ENCODE measurements at regions of chr6 and their contacts with region 1.

Region 1: GRCh38 chr6:41735427-41736356 is at the start of gene TFEB:
- DNase-seq: peak; percentile 97
- ATAC-seq: peak; percentile 76
- H3K4me3 Mint-ChIP-seq: peak within 1 kb of the TSS; percentile 74
- H3K27ac Mint-ChIP-seq: peak within 1 kb of the TSS; percentile 42
- H3K4me1 Mint-ChIP-seq: peaks cover 29% of the 10 kb centered on the region
- H3K27me3 Mint-ChIP-seq: no peaks in the 10 kb centered on the region
- total RNA-seq, gene TFEB: 8.5 to 9.2 TPM

Region 2: GRCh38 chr6:41545703-41546474 is 189.8 kb before region 1 on chr6 and contains the start of gene FOXP4:
- CTCF ChIA-PET with region 1: no interaction called
- POLR2A ChIA-PET with region 1: no interaction called
- intact Hi-C with region 1: loop called in 1 of 2 experiments (anchors 1 kb)
- DNase-seq: peak; percentile 92
- ATAC-seq: peak; percentile 84
- H3K4me3 Mint-ChIP-seq: peak within 1 kb of the TSS; percentile 84
- H3K27ac Mint-ChIP-seq: peak within 1 kb of the TSS; percentile 92
- H3K4me1 Mint-ChIP-seq: peaks cover 15% of the 10 kb centered on the region
- H3K27me3 Mint-ChIP-seq: peaks cover 6% of the 10 kb centered on the region
- total RNA-seq, gene FOXP4: 11.1 to 13.8 TPM

Region 3: DNA sequence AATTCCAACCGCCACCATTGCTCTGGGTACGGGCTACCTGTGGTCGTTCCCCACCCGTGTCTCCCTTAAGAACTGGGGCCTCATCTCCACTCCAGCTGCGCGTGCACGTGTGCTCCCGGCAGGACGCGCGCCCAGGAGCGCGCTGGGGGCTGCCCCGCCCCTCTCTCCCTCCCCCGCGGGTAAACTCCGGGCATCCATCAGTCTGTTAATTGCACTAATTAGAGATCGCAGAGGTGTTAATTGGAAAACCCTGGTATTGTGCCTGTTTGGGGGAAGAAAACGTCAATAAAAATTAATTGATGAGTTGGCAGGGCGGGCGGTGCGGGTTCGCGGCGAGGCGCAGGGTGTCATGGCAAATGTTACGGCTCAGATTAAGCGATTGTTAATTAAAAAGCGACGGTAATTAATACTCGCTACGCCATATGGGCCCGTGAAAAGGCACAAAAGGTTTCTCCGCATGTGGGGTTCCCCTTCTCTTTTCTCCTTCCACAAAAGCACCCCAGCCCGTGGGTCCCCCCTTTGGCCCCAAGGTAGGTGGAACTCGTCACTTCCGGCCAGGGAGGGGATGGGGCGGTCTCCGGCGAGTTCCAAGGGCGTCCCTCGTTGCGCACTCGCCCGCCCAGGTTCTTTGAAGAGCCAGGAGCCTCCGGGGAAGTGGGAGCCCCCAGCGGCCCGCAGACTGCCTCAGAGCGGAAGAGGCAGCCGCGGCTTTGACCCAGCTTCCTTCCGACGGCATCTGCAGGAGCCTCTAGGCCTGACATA is 175.1 kb before region 1 on chr6:
- CTCF ChIA-PET with region 1: no interaction called
- POLR2A ChIA-PET with region 1: no interaction called
- intact Hi-C with region 1: loop called in 1 of 2 experiments (anchors 2 kb)
- DNase-seq: peak; percentile 90
- ATAC-seq: peak; percentile 93
- H3K4me3 Mint-ChIP-seq: peak overlapping the region; percentile 79
- H3K27ac Mint-ChIP-seq: peak overlapping the region; percentile 82
- H3K4me1 Mint-ChIP-seq: peaks cover 18% of the 10 kb centered on the region
- H3K27me3 Mint-ChIP-seq: no peaks in the 10 kb centered on the region

Region 4: GRCh38 chr6:41705996-41706835 is 29.5 kb before region 1 on chr6:
- CTCF ChIA-PET with region 1: interaction called, 10 read pairs
- POLR2A ChIA-PET with region 1: no interaction called
- intact Hi-C with region 1: loop called in 1 of 2 experiments (anchors 1 kb)
- DNase-seq: peak; percentile 90
- ATAC-seq: peak; percentile 93
- H3K4me3 Mint-ChIP-seq: peak overlapping the region; percentile 34
- H3K27ac Mint-ChIP-seq: peak overlapping the region; percentile 85
- H3K4me1 Mint-ChIP-seq: peaks cover 33% of the 10 kb centered on the region
- H3K27me3 Mint-ChIP-seq: no peaks in the 10 kb centered on the region

Region 5: DNA sequence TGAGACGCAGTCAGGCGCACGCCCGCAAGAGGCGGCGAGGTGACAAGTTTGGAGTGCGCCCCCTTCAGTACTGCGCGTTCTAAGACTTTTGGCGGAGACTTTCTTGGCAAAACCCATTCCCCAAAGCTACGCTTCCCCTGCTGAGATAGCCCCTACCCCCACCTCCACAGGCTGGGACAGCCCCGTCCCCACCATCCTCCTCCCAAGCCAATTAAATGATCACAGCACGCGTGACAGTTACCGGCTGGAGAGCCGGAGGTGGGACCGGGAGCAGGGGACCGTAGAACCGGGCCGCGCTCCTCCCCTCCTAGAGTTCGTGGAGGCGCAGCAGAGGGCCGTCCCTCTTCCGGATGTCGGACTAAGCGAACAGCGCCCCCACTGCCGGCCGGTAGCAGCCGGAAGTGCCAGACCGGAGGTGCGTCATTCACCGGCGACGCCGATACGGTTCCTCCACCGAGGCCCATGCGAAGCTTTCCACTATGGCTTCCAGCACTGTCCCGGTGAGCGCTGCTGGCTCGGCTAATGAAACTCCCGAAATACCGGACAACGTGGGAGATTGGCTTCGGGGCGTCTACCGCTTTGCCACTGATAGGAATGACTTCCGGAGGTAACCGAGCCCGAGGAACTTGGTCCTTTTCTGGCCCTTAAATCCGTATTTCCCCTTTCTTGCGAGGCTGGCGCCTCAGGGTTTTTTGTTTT is 51.7 kb after region 1 on chr6 and contains the start of gene TOMM6:
- CTCF ChIA-PET with region 1: interaction called, 19 read pairs
- POLR2A ChIA-PET with region 1: no interaction called
- intact Hi-C with region 1: loop called (anchors 1 kb)
- DNase-seq: peak; percentile 98
- ATAC-seq: peak; percentile 86
- H3K4me3 Mint-ChIP-seq: peak within 1 kb of the TSS; percentile 96
- H3K27ac Mint-ChIP-seq: peak within 1 kb of the TSS; percentile 98
- H3K4me1 Mint-ChIP-seq: peaks cover 19% of the 10 kb centered on the region
- H3K27me3 Mint-ChIP-seq: peaks cover 2% of the 10 kb centered on the region
- total RNA-seq, gene TOMM6: 282 to 345 TPM

Region 6: DNA sequence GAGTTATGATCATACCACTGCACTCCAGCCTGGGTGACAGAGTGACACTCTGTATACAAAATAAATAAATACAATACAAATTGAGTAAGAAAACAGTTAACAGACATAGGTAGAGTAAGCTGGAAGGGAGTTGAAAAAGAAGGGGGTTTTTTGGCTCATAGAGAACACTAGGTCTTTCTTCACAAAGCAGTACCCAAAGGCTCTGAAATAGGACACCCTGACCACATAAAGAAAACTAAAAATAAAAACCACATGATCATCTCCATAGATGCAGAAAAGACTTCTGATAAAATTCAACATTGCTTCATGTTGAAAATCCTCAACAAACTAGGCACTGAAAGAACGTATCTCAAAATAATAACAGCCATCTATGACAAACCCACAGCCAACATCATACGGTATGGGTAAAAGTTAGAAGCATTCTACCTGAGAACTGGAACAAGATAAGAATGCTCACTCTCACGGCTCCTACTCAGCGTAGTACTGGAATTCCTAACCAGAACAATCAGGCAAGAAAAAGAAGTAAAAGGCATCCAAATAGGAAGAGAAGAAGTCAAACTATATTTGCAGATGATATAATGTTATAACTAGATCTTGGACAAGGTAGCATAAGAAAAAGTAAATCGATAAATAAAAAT is 100.4 kb after region 1 on chr6:
- CTCF ChIA-PET with region 1: no interaction called
- POLR2A ChIA-PET with region 1: no interaction called
- intact Hi-C with region 1: no loop called
- DNase-seq: no peak
- ATAC-seq: no peak
- H3K4me3 Mint-ChIP-seq: no peak overlapping the region
- H3K27ac Mint-ChIP-seq: no peak overlapping the region
- H3K4me1 Mint-ChIP-seq: no peaks in the 10 kb centered on the region
- H3K27me3 Mint-ChIP-seq: no peaks in the 10 kb centered on the region

Region 7: DNA sequence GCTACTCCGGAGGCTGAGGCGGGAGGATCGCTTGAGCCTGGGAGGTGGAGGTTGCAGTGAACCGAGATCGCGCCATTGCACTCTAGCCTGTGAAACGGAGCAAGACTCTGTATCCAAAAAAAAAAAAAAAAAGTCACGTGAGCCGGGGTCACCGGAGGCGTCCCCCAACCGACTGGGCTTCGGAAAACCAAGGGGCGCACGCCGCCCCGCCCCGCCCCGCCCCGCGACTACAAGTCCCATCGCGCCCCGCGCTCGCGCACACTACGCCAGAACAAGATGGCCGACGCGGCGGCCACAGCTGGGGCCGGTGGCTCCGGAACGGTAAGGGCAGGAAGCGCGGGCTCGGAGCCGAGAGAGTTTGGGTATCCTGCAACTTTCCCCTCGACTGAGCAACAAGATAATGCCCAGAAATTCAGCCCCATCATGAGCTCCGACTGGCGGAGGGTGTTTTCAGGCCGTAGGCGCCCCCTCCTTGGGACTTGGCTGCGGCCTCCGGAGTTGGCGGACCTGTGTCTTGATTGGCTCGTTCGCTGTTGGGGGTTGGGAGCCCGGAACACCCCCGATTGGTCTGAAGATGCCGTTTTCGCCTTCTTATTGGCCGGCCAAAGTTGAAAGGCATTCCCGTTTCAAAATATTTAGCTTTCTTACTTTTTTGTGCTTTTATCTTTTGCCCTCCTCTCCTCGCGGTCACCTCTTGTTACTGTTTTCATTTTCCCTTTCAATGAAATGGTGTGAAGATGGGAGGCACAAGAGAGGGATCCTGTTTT is 314.8 kb after region 1 on chr6 and contains the start of gene TAF8:
- CTCF ChIA-PET with region 1: no interaction called
- POLR2A ChIA-PET with region 1: no interaction called
- intact Hi-C with region 1: loop called (anchors 1 to 2 kb)
- DNase-seq: peak; percentile 94
- ATAC-seq: peak; percentile 76
- H3K4me3 Mint-ChIP-seq: peak within 1 kb of the TSS; percentile 88
- H3K27ac Mint-ChIP-seq: peak within 1 kb of the TSS; percentile 96
- H3K4me1 Mint-ChIP-seq: peaks cover 64% of the 10 kb centered on the region
- H3K27me3 Mint-ChIP-seq: no peaks in the 10 kb centered on the region
- total RNA-seq, gene TAF8: 52.3 to 53.1 TPM

Region 8: DNA sequence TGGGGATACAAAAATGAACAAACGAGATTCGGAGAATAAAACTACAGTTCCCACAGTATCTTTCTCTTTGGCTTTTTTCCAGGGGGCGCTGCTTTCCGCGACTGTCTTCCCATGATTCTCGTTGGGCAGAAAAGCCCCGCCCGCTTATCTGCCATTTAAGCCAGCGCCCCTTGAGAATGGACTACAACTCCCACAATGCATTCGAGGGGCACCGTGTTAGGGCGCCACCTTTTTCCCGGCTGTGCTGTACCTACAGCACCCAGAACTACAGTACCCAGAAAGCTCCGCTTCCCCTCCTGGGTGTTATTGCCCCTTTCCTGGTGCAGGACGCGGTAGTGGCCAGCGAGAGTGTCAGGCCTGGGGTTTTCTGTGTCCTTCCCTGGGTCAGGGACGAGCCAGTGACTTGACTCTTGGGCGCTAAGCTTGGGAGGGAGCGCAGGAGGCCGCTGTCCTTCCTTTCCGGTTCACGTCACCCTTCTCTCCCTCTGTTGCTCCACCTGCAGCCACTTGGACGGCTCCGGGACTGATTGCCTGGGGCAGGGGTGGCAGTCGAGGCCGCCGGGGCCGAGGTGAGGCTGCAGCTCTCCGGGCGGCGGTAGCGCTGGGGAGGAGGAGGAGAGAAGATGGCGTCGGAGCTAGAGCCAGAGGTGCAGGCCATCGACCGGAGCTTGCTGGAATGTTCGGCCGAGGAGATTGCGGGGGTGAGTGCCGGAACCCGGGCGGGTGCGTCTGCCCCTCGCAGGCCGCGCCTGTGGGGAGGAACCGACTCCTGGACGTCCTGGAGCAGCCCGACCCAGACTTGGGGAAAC is 828.2 kb after region 1 on chr6 and contains the start of gene UBR2:
- CTCF ChIA-PET with region 1: no interaction called
- POLR2A ChIA-PET with region 1: no interaction called
- intact Hi-C with region 1: loop called in 1 of 2 experiments (anchors 1 kb)
- DNase-seq: peak; percentile 97
- ATAC-seq: peak; percentile 97
- H3K4me3 Mint-ChIP-seq: peak within 1 kb of the TSS; percentile 97
- H3K27ac Mint-ChIP-seq: peak within 1 kb of the TSS; percentile 95
- H3K4me1 Mint-ChIP-seq: peaks cover 31% of the 10 kb centered on the region
- H3K27me3 Mint-ChIP-seq: no peaks in the 10 kb centered on the region
- total RNA-seq, gene UBR2: 23.9 to 28.1 TPM